ENCODE measurements at regions of chr18 and their contacts with region 1.

Region 1: DNA sequence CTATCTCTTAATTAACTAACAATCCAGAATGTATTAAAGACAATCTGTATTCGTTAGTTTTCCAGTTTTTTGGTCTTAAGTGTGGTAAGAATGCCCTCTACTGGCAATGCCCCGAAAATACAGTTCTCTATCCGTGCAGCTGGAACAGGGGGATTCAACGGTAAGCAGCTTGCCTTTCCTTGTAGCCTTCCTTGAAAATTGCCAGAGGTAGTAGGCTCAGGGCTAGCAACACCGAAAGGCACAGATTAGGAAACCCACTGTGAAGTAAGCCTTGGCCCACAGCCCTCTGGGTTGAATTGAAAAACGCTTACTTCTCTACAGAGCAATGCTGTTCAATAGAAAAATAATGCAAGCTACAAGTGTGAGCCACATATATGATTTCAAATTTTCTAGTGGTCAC is 17.1 kb upstream of the VPS4B start:
- DNase-seq: peak; percentile 54
- H3K4me3 Mint-ChIP-seq: no peak overlapping the region
- H3K27ac Mint-ChIP-seq: no peak overlapping the region
- H3K4me1 Mint-ChIP-seq: no peaks in the 10 kb centered on the region
- H3K27me3 Mint-ChIP-seq: peaks cover 7% of the 10 kb centered on the region

Region 2: GRCh38 chr18:63016270-63016669 is 423.1 kb before region 1 on chr18:
- CTCF ChIA-PET with region 1: interaction called, 102 read pairs
- POLR2A ChIA-PET with region 1: no interaction called
- intact Hi-C with region 1: loop called (anchors 1 kb)
- DNase-seq: peak; percentile 63
- H3K4me3 Mint-ChIP-seq: no peak overlapping the region
- H3K27ac Mint-ChIP-seq: no peak overlapping the region
- H3K4me1 Mint-ChIP-seq: no peaks in the 10 kb centered on the region
- H3K27me3 Mint-ChIP-seq: peaks cover 20% of the 10 kb centered on the region

Region 3: GRCh38 chr18:63119647-63120046 is 319.7 kb before region 1 on chr18:
- CTCF ChIA-PET with region 1: interaction called, 4 read pairs
- POLR2A ChIA-PET with region 1: no interaction called
- intact Hi-C with region 1: loop called (anchors 2 kb)
- DNase-seq: peak; percentile 55
- H3K4me3 Mint-ChIP-seq: no peak overlapping the region
- H3K27ac Mint-ChIP-seq: no peak overlapping the region
- H3K4me1 Mint-ChIP-seq: peaks cover 10% of the 10 kb centered on the region
- H3K27me3 Mint-ChIP-seq: peaks cover 4% of the 10 kb centered on the region

Region 4: GRCh38 chr18:63339920-63340484 is 99.3 kb before region 1 on chr18:
- CTCF ChIA-PET with region 1: interaction called, 75 read pairs
- POLR2A ChIA-PET with region 1: no interaction called
- intact Hi-C with region 1: loop called (anchors 1 kb)
- DNase-seq: peak; percentile 37
- H3K4me3 Mint-ChIP-seq: no peak overlapping the region
- H3K27ac Mint-ChIP-seq: no peak overlapping the region
- H3K4me1 Mint-ChIP-seq: peaks cover 12% of the 10 kb centered on the region
- H3K27me3 Mint-ChIP-seq: no peaks in the 10 kb centered on the region

Region 5: DNA sequence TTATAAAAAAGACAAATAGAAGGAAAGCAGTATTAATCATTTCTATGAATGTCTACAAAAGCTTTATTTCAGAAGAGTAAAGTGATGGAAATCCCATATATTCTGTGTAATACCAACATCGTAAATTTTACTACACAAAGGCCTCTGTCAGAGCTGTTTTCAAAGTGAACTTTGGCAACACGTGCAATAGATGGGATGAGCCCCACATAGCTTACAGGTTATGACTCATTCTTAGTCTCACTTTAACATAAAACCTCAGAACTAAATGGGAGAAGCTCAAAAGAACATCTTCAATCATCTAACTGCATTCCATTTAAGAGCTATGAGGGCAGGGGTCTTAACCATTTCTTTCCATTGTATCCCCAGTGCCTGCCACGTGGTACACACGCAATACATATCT is 28.5 kb before region 1 on chr18:
- CTCF ChIA-PET with region 1: interaction called, 10 read pairs
- POLR2A ChIA-PET with region 1: no interaction called
- intact Hi-C with region 1: no loop called
- DNase-seq: no peak
- H3K4me3 Mint-ChIP-seq: no peak overlapping the region
- H3K27ac Mint-ChIP-seq: peak overlapping the region; percentile 15
- H3K4me1 Mint-ChIP-seq: peaks cover 46% of the 10 kb centered on the region
- H3K27me3 Mint-ChIP-seq: no peaks in the 10 kb centered on the region

Region 6: GRCh38 chr18:63470751-63471150 is 31.4 kb after region 1 on chr18:
- CTCF ChIA-PET with region 1: no interaction called
- POLR2A ChIA-PET with region 1: no interaction called
- intact Hi-C with region 1: no loop called
- DNase-seq: no peak
- H3K4me3 Mint-ChIP-seq: no peak overlapping the region
- H3K27ac Mint-ChIP-seq: no peak overlapping the region
- H3K4me1 Mint-ChIP-seq: no peaks in the 10 kb centered on the region
- H3K27me3 Mint-ChIP-seq: peaks cover 3% of the 10 kb centered on the region

Region 7: DNA sequence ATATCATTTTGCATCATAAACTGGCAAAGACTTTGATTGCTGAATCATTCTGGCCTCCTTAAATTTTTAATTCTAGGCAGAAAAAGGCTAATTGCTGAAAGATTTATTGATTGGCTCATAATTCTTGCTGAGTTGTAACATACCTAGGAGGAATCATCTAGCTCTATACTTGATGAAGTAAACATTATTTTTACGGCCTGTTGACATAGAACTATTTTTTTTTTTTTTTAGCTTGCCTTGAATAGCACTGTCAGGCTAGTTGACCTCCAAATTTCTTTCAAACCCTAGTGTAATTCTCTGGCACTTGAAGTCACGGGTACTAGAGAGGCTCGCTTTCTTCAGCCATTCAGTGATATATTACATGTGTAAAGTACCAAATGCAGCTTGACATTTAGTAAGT is 105.7 kb after region 1 on chr18:
- CTCF ChIA-PET with region 1: no interaction called
- POLR2A ChIA-PET with region 1: no interaction called
- intact Hi-C with region 1: no loop called
- DNase-seq: no peak
- H3K4me3 Mint-ChIP-seq: no peak overlapping the region
- H3K27ac Mint-ChIP-seq: no peak overlapping the region
- H3K4me1 Mint-ChIP-seq: no peaks in the 10 kb centered on the region
- H3K27me3 Mint-ChIP-seq: peaks cover 11% of the 10 kb centered on the region

Measured in activated CD4-positive, alpha-beta memory T cell treated with anti-CD3 and anti-CD28 coated beads for 36 hours (primary cell).